ENCODE measurements at regions of chr16 and their contacts with region 1.

Region 1: DNA sequence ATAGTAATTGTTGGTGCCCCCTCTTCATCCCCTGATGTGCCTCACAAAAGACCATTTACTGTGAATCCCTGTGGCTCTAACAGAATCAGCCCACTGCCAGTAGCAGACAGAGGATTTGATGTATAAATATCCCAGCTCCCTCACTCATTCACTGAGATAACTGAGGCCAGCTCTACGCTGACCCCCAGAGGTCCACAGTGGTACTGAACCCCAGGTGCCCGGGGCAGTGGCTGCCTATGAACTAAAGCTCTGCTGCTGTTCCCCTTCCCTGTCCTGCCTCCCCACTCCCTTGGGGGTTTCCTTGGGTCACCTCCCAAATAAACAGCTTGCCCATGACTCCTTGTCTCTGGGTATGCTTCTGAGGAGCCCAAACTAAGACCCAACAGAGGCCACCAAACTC is 295.8 kb downstream of the FOXL1 start:
- DNase-seq: peak; percentile 80
- ATAC-seq: peak; percentile 96
- H3K4me3 Mint-ChIP-seq: no peak overlapping the region
- H3K27ac Mint-ChIP-seq: no peak overlapping the region
- H3K4me1 Mint-ChIP-seq: no peaks in the 10 kb centered on the region
- H3K27me3 Mint-ChIP-seq: peaks cover 3% of the 10 kb centered on the region
- CTCF ChIP-seq: peak; percentile 81

Region 2: DNA sequence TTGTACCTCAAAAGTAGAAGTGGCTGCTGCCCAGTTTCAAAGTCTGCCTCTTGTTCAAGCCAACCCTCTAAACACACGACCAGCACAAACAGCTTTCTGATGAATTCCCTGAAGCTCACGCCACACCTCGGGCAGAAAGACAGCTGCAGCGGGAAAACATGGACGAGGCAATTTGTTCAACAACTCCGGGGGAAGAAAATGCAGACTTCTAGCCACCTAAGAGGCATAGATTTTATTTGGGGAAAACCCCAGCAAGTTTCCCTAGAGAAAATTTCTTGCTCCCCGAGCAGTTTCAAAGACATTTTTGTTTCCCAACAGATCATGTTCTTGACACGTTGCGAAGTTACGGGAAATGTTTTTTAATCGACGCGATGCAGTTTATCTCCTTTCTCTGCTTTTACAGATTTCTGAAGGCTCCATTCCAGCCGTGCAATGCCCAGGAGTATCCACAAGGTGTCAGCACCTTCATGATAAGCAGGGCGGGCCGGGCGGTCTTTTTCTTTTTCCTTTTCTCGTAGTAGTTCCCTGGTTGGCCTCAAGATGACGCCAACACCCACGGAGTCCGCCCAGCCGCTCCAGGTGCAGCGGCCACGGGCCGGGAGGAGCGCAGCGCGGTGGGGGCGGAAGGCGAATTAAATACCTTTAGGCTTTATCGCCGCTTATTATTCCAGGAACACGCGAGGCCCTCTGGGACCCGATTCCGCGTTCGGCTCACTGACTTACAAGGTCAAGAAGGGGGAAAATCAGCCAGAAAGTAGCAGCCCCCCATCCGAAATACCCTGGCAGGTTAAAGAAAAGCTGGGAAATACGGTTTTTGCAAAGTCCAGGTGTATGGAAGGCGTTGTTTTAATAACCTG is 310.4 kb before region 1 on chr16:
- CTCF ChIA-PET with region 1: interaction called, 37 read pairs
- POLR2A ChIA-PET with region 1: no interaction called
- DNase-seq: peak; percentile 93
- ATAC-seq: peak; percentile 27
- H3K4me3 Mint-ChIP-seq: peak overlapping the region; percentile 62
- H3K27ac Mint-ChIP-seq: no peak overlapping the region
- H3K4me1 Mint-ChIP-seq: peaks cover 20% of the 10 kb centered on the region
- H3K27me3 Mint-ChIP-seq: peaks cover 66% of the 10 kb centered on the region
- CTCF ChIP-seq: peak; percentile 98

Region 3: DNA sequence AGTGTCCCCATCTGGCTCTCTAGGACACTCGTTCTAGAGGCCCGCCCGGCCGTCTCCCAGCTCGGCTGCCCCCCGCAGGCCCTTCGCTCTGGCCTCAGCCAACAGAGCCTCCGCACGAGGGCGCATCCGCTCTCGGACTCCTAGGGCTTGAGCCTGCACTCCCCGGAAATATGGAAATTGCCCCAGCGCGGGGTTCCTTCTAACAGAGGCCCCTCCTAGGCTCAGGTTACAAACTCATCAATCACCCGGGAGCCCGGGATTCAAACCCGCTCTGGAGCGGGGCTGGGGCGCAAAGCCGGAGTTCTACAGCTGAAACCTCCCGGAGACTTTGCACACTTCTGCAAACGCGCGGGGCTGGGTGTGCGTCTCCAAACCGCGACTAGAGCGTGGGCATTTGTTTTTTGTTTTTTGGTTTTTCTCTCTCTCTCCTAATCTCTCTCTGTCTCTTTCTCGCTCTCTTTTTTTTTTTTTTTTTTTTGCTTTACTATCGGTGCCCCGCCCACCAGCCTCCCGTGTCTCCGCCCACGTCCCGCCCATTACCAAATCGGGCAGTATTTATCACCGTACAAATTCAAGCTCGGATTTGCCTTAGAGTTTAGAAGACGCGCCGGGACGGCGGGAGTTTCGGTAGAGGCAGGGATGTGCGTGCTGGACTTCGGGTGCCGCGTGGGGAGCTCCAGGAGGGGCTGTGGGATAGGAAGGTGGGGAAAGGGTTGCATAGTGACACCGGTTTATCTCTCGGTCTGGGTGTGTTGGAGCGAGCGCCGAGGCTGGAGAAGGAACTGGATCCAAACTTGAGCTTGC is 298.2 kb before region 1 on chr16:
- CTCF ChIA-PET with region 1: interaction called, 18 read pairs
- POLR2A ChIA-PET with region 1: no interaction called
- DNase-seq: peak; percentile 92
- ATAC-seq: peak; percentile 74
- H3K4me3 Mint-ChIP-seq: peak overlapping the region; percentile 89
- H3K27ac Mint-ChIP-seq: no peak overlapping the region
- H3K4me1 Mint-ChIP-seq: peaks cover 68% of the 10 kb centered on the region
- H3K27me3 Mint-ChIP-seq: peaks cover 98% of the 10 kb centered on the region
- CTCF ChIP-seq: no peak

Region 4: DNA sequence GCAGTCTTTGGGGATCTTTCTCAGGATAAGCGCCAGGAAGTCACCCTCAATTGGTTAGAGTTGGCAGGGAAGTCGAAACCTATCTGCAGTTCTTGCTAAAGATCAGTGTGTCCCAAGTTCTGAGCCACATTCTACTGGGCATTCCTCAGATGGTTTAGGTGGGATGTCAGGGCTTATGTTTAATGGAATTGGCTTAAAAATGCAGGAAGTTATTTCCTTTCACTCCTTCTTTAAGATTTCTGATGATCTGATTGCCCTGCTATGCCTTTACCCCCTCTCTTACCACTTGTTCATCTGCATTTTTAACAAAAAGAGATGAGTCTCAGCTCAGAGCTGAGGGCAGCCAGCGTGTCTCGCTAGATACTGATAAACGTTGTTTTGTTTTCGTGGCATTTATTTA is 265.0 kb before region 1 on chr16:
- CTCF ChIA-PET with region 1: no interaction called
- POLR2A ChIA-PET with region 1: no interaction called
- DNase-seq: no peak
- ATAC-seq: no peak
- H3K4me3 Mint-ChIP-seq: no peak overlapping the region
- H3K27ac Mint-ChIP-seq: no peak overlapping the region
- H3K4me1 Mint-ChIP-seq: peaks cover 1% of the 10 kb centered on the region; the same call in 1 of the 2 replicates
- H3K27me3 Mint-ChIP-seq: peaks cover 4% of the 10 kb centered on the region; the same call in 1 of the 2 replicates
- CTCF ChIP-seq: no peak

Region 5: GRCh38 chr16:86781046-86781445 is 93.1 kb before region 1 on chr16:
- CTCF ChIA-PET with region 1: interaction called, 10 read pairs
- POLR2A ChIA-PET with region 1: no interaction called
- DNase-seq: no peak
- ATAC-seq: no peak
- H3K4me3 Mint-ChIP-seq: no peak overlapping the region
- H3K27ac Mint-ChIP-seq: no peak overlapping the region
- H3K4me1 Mint-ChIP-seq: no peaks in the 10 kb centered on the region
- H3K27me3 Mint-ChIP-seq: no peaks in the 10 kb centered on the region
- CTCF ChIP-seq: no peak

Region 6: GRCh38 chr16:87017365-87018012 is 143.3 kb after region 1 on chr16:
- CTCF ChIA-PET with region 1: interaction called, 20 read pairs
- POLR2A ChIA-PET with region 1: no interaction called
- DNase-seq: no peak
- ATAC-seq: peak; percentile 71
- H3K4me3 Mint-ChIP-seq: no peak overlapping the region
- H3K27ac Mint-ChIP-seq: no peak overlapping the region
- H3K4me1 Mint-ChIP-seq: 0 out of 2 replicates have a peak, but pooled peaks cover 4% of the 10 kb centered on the region
- H3K27me3 Mint-ChIP-seq: no peaks in the 10 kb centered on the region; the same call in 1 of the 2 replicates
- CTCF ChIP-seq: no peak

Region 7: GRCh38 chr16:87062569-87063442 is 188.7 kb after region 1 on chr16:
- CTCF ChIA-PET with region 1: interaction called, 22 read pairs
- POLR2A ChIA-PET with region 1: no interaction called
- DNase-seq: peak; percentile 82
- ATAC-seq: peak; percentile 81
- H3K4me3 Mint-ChIP-seq: peak overlapping the region; percentile 20
- H3K27ac Mint-ChIP-seq: no peak overlapping the region
- H3K4me1 Mint-ChIP-seq: peaks cover 31% of the 10 kb centered on the region
- H3K27me3 Mint-ChIP-seq: no peaks in the 10 kb centered on the region
- CTCF ChIP-seq: peak; percentile 76